ENCODE measurements at regions of chr6 and their contacts with region 1.

Region 1: GRCh38 chr6:170529839-170530469 is 23.2 kb downstream of the PSMB1 start:
- DNase-seq: peak; percentile 86
- ATAC-seq: peak; percentile 91

Region 2: DNA sequence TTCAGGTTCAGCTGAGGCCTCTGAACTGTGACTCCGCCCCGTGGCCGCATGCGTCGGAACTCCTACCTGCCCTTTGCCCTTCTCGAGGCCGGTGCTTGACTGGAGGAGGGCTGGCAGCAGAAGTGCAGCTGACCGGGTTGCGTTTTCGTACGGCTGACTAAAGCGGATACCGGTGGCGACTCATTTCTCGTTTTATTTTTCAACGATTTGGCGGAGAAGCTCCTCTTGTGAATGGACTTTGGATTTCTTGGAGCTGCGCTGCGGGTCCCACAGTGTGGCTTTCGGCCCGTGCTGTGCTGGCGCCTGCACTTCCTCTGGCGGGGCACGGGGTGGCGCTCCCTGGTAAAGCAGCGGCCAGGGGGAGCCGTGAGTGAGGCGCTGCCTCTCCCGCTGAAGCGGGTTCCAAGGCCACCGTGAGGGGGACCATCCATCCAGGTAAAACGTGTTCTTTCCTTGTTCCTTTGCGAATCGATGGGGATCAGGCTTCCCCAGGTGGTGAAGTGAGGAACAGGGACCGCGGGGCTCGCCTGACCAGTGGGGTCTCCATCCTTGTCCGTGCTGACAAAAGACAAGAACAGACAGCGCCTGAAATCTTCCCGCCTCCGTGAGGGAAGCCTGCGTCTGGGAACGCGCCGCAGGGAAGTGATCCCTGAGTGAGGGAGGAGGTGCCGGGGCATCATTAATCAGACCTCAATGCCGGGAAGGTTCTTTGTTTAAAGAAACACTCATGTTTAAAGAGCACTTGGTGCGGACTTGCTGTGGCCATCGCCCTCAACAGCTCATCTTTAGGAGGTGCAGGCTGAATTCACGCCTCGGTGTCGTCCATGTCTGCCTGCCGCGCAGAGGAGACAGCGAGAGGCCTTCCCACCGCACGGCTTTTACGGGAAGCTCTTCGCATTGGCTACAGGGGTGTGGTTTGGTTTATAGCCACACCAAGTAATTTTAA is 739.7 kb before region 1 on chr6:
- intact Hi-C with region 1: loop called (anchors 5 kb)
- DNase-seq: peak; percentile 79
- ATAC-seq: peak; percentile 98

Region 3: DNA sequence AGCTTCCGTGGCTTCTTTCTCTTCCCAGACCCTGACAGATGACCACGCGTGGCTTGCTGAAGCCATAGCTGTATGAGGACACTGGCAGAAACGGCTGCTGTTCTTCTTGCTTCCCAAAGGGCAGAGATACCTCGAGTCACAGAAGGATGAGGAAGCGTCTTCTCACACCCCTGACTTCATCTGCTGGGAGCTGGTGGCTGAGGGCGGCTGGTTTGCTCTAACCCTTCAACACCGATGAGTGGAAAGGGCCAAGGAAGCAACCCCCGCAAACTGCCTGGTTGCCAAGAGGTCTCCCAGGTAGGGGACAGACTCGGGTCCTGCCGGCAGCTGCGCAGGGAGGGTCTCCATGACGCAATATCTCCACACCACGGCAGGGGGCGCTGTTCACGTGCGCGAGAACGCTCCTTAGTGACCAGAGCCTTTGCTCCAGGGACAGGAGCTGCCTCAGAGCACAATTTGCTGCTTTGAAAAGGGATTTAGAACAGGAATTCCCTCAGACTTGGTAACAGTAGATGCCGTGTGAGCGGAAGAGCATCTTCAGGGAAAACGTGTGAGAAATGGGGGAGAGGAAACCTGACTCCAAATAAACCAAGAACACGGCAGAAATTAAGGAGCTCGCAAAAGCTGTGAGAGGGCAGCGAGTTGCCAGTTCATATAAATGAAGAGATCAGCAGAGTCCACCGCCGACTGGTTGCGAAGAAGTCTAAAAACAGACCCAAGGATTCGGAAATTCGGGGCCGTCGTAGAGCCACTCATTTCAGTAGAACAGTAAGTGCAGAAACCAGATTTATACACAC is 698.3 kb before region 1 on chr6:
- intact Hi-C with region 1: loop called (anchors 2 kb)
- DNase-seq: peak; percentile 83
- ATAC-seq: peak; percentile 95

Region 4: GRCh38 chr6:170295510-170296422 is 234.2 kb before region 1 on chr6:
- intact Hi-C with region 1: loop called (anchors 10 kb)
- DNase-seq: peak; percentile 59
- ATAC-seq: peak; percentile 32

Region 5: GRCh38 chr6:170476360-170476759 is 53.6 kb before region 1 on chr6:
- intact Hi-C with region 1: no loop called
- DNase-seq: no peak
- ATAC-seq: no peak

Region 6: DNA sequence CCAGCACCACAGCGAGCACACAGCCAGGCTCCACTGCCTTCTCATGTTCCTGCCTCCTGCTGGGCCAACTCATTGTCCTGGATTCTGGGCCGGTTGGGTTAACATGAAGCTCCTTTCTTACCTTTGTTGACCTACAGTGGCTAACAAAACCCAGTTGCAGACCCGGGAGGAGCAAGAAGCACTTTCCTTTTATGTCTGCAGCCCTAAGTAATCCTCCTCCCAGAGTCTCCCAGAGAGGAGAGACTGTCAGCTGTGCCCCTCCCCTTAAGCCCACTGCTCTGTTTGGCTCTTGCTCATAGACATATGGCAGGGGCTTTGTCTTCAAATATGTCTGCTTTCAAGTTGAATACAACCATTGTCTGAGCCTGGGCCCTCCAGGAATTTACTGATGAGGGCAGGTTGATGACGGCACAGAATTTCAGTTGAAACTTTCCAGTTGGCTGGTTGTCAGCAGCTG is 32.1 kb before region 1 on chr6:
- intact Hi-C with region 1: no loop called
- DNase-seq: no peak
- ATAC-seq: no peak